HEK293 (cell line): ENCODE measurements at regions of chr7 and their contacts with region 1.

Region 1: DNA sequence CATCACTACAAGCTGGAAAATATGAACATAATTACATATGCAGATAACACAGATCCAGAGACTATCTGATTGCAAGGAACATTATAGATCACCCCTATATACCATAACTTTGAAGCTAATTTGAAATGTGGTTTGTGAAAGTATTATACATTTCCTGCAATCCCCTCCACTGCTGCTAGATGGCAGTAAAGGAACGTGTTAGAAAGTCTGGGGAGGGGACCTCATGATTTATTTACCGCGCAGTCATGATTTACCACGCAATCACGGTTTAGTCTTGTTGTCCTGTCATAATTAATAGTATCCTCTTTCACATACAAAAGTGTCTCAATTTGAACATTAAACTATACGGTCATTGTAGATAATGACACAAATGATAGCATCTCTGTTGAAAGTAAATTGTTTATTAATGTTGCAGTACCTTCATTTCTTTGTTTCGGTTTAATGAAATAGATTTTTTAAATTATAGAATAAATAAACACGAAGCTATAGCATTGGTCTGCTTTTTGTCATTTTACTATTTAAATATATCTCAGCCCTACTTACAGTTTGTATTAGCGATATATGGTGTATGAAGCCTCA is 145.3 kb upstream of the PRSS1 start:
- H3K4me3 ChIP-seq: no peak overlapping the region
- H3K27ac ChIP-seq: no peak overlapping the region
- H3K4me1 ChIP-seq: no peaks in the 10 kb centered on the region
- CTCF ChIP-seq: peak; percentile 40; the same call in 1 of the 2 replicates

Region 2: DNA sequence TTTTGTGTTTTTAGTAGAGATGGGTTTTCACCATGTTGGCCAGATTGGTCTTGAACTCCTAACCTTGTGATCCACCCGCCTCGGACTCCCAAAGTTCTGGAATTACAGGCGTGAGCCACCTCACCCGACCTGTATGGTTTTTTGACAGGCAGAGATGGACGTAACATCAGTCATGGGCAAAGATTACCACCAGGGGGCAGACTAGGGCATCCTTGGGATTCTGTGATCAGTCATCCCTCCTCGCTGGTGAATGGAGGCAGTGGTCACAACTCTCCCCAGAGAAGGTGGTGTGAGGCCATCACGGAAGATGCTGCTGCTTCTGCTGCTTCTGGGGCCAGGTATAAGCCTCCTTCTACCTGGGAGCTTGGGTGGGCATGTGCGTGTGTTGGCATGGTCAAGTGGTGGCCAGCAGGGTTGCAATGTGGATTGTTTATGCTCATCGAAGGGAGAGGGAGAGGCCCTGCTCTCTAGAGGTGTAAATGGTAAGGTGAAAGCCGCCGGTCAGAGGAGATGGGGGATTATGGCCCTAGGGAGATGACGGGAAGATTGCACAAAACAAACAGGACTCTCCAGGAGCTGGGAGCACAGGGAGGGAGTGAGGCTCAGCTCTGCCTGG is 22.6 kb after region 1 on chr7:
- CTCF ChIA-PET with region 1: interaction called, 16 read pairs
- POLR2A ChIA-PET with region 1: no interaction called
- H3K4me3 ChIP-seq: no peak overlapping the region
- H3K27ac ChIP-seq: no peak overlapping the region
- H3K4me1 ChIP-seq: no peaks in the 10 kb centered on the region
- CTCF ChIP-seq: no peak

Region 3: GRCh38 chr7:142632291-142633134 is 28.6 kb after region 1 on chr7:
- CTCF ChIA-PET with region 1: interaction called, 16 read pairs
- POLR2A ChIA-PET with region 1: no interaction called
- H3K4me3 ChIP-seq: no peak overlapping the region
- H3K27ac ChIP-seq: no peak overlapping the region
- H3K4me1 ChIP-seq: no peaks in the 10 kb centered on the region
- CTCF ChIP-seq: peak; percentile 51; the same call in 1 of the 2 replicates